ENCODE measurements at regions of chr6 and their contacts with region 1.

Region 1: GRCh38 chr6:71383901-71384489 is 95.4 kb downstream of the OGFRL1 start:
- DNase-seq: peak in 1 of 4 donors; percentile 66
- ATAC-seq: peak; percentile 57
- H3K4me3 ChIP-seq: no peak overlapping the region
- H3K27ac ChIP-seq: no peak overlapping the region
- H3K4me1 ChIP-seq: peaks cover 7 to 38% of the 10 kb centered on the region in 2 donors
- H3K27me3 ChIP-seq: no peaks in the 10 kb centered on the region
- CTCF ChIP-seq: peak in 1 of 2 donors; percentile 69

Region 2: DNA sequence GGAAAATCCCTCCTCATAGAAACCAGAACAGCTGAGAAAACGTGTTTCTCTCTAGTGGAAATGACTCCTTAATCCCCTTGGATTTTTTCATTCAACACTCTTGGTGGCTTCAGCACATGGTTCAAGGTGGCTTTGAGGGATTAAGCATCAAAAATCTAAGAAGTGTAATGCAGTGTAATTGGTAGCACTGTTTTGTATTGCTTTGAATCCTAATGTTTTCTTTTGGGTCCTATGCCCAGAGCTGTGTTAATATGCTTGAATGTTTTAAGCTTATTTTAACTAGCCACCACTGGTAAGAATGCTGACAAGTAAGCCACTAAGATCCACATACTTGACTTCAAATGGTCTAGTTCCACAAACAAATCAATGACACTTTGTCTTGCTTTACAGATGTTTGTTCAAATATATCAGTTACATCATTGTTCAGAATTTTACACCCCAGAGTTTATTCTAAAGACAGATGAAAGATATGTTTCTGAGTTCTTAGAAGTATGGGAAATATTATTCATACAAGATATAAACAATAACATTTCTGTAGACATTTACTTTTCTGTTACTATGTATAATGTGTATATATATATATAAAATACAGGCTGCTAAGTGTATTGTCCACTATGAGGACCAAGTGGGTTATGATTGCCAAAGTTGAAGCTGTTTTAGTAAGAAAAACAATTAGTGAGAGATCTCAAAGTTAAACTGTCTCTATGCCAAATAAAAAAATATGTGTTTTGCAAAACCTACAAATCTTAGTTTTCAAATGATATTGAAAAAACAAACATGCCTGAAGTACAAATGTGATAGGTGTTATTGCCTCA is 125.4 kb after region 1 on chr6:
- intact Hi-C with region 1: loop called in 1 of 2 experiments (anchors 10 kb)
- DNase-seq: peak in 2 of 4 donors; percentile 70 to 71
- ATAC-seq: peak; percentile 50
- H3K4me3 ChIP-seq: no peak overlapping the region
- H3K27ac ChIP-seq: peak overlapping the region in 1 of 2 donors; percentile 9
- H3K4me1 ChIP-seq: peaks cover 0 to 3% of the 10 kb centered on the region in 2 donors
- H3K27me3 ChIP-seq: no peaks in the 10 kb centered on the region
- CTCF ChIP-seq: no peak